ENCODE measurements at regions of chr11 and their contacts with region 1.

Region 1: DNA sequence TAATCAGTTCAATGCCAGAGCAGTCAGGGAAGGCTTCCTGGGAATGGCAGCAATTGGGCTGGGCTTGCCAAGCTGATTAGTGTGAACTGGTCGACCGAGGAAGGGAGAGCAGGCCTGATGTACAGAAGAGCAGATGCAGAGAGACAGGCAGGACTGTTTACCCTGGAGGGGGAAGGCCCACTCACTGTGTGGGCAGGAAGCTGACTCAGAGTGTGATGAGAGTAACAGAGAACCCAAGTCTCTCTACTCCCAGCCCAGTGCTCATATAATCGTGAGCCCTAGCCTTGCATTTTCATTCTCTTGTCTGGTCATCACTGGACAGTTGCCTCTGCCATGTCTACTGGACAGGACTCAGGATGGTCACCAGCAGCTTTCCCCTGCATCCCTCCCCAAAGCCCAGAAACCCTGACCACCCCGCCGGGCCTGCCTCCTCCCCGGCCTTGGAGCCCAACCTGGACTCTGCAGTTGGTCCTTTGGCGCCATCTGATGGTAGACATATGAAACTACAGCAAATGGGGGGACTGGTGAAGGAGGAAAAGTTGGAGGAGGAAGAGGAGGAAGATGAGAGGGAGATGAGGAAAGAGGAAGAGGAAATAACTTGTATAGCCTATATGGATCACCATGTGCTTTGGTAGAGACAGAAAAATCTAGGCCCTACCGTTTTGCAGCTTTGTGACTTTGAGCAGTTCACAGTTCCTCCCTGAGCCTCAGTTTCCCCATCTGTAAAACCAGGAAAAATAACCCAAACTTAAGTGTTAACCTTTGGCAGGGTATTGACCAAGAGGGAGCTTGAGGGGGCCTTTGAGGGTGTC is 43.4 kb upstream of the PRDM11 start:
- DNase-seq: peak; percentile 69 to 76 (median 71)
- H3K4me3 ChIP-seq: peak overlapping the region in 1 of 2 donors; percentile 34
- H3K4me3 Mint-ChIP-seq: peak overlapping the region; percentile 39 to 88 (median 68)
- H3K27ac ChIP-seq: peak overlapping the region; percentile 16
- H3K27ac Mint-ChIP-seq: peak overlapping the region; percentile 4 to 94 (median 46)
- H3K4me1 ChIP-seq: peaks cover 17% of the 10 kb centered on the region
- H3K4me1 Mint-ChIP-seq: peaks cover 9 to 20% (median 18%) of the 10 kb centered on the region in 4 donors
- H3K27me3 ChIP-seq: no peaks in the 10 kb centered on the region
- H3K27me3 Mint-ChIP-seq: peaks cover 5 to 7% of the 10 kb centered on the region in 2 donors

Region 2: GRCh38 chr11:44936525-44936924 is 166.5 kb before region 1 on chr11:
- CTCF ChIA-PET with region 1: interaction called, 1,298 read pairs
- POLR2A ChIA-PET with region 1: interaction called, 61 read pairs
- intact Hi-C with region 1: loop called (anchors 1 kb)
- DNase-seq: peak; percentile 72 to 79 (median 74)
- H3K4me3 ChIP-seq: no peak overlapping the region
- H3K4me3 Mint-ChIP-seq: no peak overlapping the region
- H3K27ac ChIP-seq: no peak overlapping the region
- H3K27ac Mint-ChIP-seq: no peak overlapping the region
- H3K4me1 ChIP-seq: peaks cover 5% of the 10 kb centered on the region
- H3K4me1 Mint-ChIP-seq: peaks cover 1 to 8% (median 5%) of the 10 kb centered on the region in 4 donors
- H3K27me3 ChIP-seq: no peaks in the 10 kb centered on the region
- H3K27me3 Mint-ChIP-seq: no peaks in the 10 kb centered on the region

Region 3: GRCh38 chr11:44964526-44965209 is 138.3 kb before region 1 on chr11:
- CTCF ChIA-PET with region 1: interaction called, 14 read pairs
- POLR2A ChIA-PET with region 1: no interaction called
- intact Hi-C with region 1: no loop called
- DNase-seq: no peak
- H3K4me3 ChIP-seq: no peak overlapping the region
- H3K4me3 Mint-ChIP-seq: no peak overlapping the region
- H3K27ac ChIP-seq: no peak overlapping the region
- H3K27ac Mint-ChIP-seq: no peak overlapping the region
- H3K4me1 ChIP-seq: no peaks in the 10 kb centered on the region
- H3K4me1 Mint-ChIP-seq: no peaks in the 10 kb centered on the region
- H3K27me3 ChIP-seq: no peaks in the 10 kb centered on the region
- H3K27me3 Mint-ChIP-seq: no peaks in the 10 kb centered on the region

Region 4: DNA sequence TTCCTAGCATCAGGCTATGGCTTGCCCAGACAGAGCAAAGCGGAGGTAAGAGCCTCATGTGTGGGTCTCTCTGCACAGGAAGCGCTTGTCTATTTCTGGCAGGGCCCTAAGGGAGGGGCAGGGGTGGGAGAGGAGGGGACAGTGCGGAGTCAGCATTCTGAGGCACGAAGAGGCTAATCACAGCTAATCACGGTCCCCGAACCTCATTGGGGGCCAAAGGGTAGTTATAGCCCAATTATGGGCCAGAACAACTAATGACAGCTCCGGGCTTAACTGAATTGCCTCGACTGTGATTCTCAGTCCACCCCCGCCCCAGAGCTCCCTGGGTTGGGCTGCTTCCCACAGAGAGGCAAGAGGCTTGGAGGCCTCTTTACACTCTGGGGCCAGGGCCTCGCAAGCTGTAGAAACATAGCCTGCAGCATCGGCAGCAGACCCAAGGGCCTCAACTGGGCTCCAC is 29.3 kb before region 1 on chr11:
- CTCF ChIA-PET with region 1: interaction called, 96 read pairs
- POLR2A ChIA-PET with region 1: interaction called, 26 read pairs
- intact Hi-C with region 1: no loop called
- DNase-seq: no peak
- H3K4me3 ChIP-seq: no peak overlapping the region
- H3K4me3 Mint-ChIP-seq: peak overlapping the region in 1 of 8 donors; percentile 18
- H3K27ac ChIP-seq: no peak overlapping the region
- H3K27ac Mint-ChIP-seq: peak overlapping the region in 1 of 7 donors; percentile 82
- H3K4me1 ChIP-seq: peaks cover 6% of the 10 kb centered on the region
- H3K4me1 Mint-ChIP-seq: peaks cover 4 to 12% (median 8%) of the 10 kb centered on the region in 4 donors
- H3K27me3 ChIP-seq: no peaks in the 10 kb centered on the region
- H3K27me3 Mint-ChIP-seq: no peaks in the 10 kb centered on the region

Region 5: DNA sequence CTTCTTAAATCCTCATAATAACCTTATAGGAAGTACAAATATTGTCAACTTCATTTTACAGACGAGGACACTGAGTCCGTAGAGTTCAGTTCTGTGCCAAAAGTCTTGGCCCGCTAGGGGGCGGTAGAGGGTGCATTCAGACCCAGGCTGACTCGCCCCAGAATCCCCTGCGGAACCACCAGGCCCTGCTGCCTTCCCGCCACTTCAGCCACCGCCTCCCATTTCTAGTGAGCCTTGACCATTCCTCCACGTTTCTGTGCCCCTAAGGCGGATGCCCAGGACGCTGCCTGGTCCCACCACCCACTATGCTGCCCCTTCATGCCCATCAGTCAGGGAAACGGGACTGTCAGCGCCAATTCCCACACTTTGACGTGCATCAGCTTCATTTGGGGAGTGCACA is 164.0 kb after region 1 on chr11:
- CTCF ChIA-PET with region 1: no interaction called
- POLR2A ChIA-PET with region 1: no interaction called
- intact Hi-C with region 1: no loop called
- DNase-seq: no peak
- H3K4me3 ChIP-seq: no peak overlapping the region
- H3K4me3 Mint-ChIP-seq: no peak overlapping the region
- H3K27ac ChIP-seq: no peak overlapping the region
- H3K27ac Mint-ChIP-seq: no peak overlapping the region
- H3K4me1 ChIP-seq: no peaks in the 10 kb centered on the region
- H3K4me1 Mint-ChIP-seq: no peaks in the 10 kb centered on the region
- H3K27me3 ChIP-seq: no peaks in the 10 kb centered on the region
- H3K27me3 Mint-ChIP-seq: peaks cover 45 to 52% of the 10 kb centered on the region in 2 donors

Region 6: DNA sequence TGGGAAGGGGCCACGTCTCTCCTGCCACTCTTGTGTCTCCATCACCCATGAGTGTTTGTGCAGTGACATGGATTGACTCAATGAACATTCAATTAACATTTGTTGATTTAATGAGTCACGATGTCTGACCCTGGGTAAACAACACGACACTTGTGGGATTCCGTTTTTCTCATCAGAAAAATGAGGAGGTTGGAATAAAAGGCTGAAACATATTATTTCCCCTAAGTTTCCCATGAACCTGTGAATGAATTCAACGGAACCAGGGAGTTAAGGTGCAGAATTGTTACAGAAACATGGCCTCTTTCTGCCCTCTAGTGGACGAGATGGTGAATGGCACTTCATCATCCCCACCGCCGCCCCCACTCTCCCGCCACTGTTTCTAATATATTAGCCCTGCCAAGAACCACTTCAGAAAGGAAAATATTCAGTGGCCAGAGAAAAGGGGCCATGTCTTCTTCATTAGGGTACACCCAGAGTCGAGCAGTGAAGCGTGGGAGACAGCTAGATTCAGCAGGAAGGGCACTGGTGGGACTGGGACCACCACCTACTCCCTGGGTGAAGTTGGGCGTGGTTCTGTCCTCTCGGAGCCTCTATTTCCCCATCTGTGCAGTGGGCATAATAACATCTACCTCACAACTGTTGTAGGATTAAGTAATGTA is 229.4 kb after region 1 on chr11:
- CTCF ChIA-PET with region 1: interaction called, 259 read pairs
- POLR2A ChIA-PET with region 1: no interaction called
- intact Hi-C with region 1: no loop called
- DNase-seq: peak in 4 of 5 donors; percentile 32 to 42 (median 38)
- H3K4me3 ChIP-seq: no peak overlapping the region
- H3K4me3 Mint-ChIP-seq: no peak overlapping the region
- H3K27ac ChIP-seq: no peak overlapping the region
- H3K27ac Mint-ChIP-seq: peak overlapping the region in 1 of 7 donors; percentile 75
- H3K4me1 ChIP-seq: no peaks in the 10 kb centered on the region
- H3K4me1 Mint-ChIP-seq: peaks cover 0 to 1% (median 0%) of the 10 kb centered on the region in 4 donors
- H3K27me3 ChIP-seq: peaks cover 10% of the 10 kb centered on the region
- H3K27me3 Mint-ChIP-seq: peaks cover 11 to 14% of the 10 kb centered on the region in 2 donors